Activated B cell treated with CpG ODN at 0.5 μM for 24 hours (primary cell): ENCODE measurements at regions of chr1 and their contacts with region 1.

Region 1: GRCh38 chr1:40032240-40032891 is 8.2 kb upstream of the CAP1 start:
- DNase-seq: no peak
- ATAC-seq: peak; percentile 76
- H3K4me3 Mint-ChIP-seq: no peak overlapping the region
- H3K27ac Mint-ChIP-seq: no peak overlapping the region
- H3K4me1 Mint-ChIP-seq: peaks cover 45% of the 10 kb centered on the region
- H3K27me3 Mint-ChIP-seq: no peaks in the 10 kb centered on the region
- CTCF ChIP-seq: peak; percentile 34

Region 2: DNA sequence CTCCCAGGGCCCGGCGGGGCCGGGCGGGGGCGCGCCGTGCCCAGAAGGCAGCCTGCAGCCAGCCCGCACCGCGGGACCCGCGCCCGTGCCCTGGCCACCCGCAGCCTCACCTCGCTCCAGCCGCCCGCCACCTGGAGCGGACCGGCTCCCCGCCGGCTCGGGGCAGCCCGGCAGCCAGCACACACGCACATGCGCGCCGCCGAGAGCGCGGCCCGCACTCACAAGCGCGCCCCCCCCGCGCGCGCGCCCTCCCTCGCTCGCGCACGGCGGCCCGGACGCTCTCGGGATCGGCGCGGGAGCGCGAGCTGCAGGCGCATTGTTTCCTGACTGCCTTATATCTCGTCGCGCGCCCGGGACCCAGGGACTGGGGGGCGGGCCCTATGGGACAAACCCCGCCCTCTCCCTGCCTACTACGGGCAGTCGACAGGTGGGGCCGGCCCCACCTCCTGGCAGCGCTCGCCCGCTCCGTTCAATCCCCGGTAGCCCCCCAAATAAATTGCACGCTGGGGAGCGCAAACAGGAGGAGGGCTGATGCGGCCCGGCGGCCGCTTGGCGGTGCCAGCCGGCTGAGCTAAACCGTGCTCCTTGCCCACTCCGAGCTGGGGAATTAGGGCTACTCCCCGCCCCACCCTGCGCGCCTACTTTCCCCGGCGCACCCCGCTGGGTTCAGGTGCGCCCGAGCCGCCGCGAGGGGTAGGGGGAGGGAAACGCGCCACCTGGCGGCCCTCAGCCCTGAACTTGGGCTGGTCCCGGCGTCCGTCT is 130.5 kb before region 1 on chr1 and contains the start of gene MYCL:
- CTCF ChIA-PET with region 1: interaction called, 5 read pairs
- POLR2A ChIA-PET with region 1: no interaction called
- intact Hi-C with region 1: loop called (anchors 5 kb)
- DNase-seq: peak; percentile 63
- ATAC-seq: peak; percentile 81
- H3K4me3 Mint-ChIP-seq: peak within 1 kb of the TSS; percentile 75
- H3K27ac Mint-ChIP-seq: no peak within 1 kb of the TSS
- H3K4me1 Mint-ChIP-seq: peaks cover 6% of the 10 kb centered on the region
- H3K27me3 Mint-ChIP-seq: peaks cover 42% of the 10 kb centered on the region
- CTCF ChIP-seq: peak; percentile 46
- total RNA-seq, gene MYCL: 0.10 and 0.29 TPM in 2 replicates

Region 3: GRCh38 chr1:39919545-39919944 is 112.8 kb before region 1 on chr1:
- CTCF ChIA-PET with region 1: interaction called, 91 read pairs
- POLR2A ChIA-PET with region 1: no interaction called
- intact Hi-C with region 1: loop called (anchors 1 kb)
- DNase-seq: peak; percentile 22
- ATAC-seq: peak; percentile 99
- H3K4me3 Mint-ChIP-seq: no peak overlapping the region
- H3K27ac Mint-ChIP-seq: no peak overlapping the region
- H3K4me1 Mint-ChIP-seq: peaks cover 2% of the 10 kb centered on the region
- H3K27me3 Mint-ChIP-seq: no peaks in the 10 kb centered on the region
- CTCF ChIP-seq: no peak

Region 4: DNA sequence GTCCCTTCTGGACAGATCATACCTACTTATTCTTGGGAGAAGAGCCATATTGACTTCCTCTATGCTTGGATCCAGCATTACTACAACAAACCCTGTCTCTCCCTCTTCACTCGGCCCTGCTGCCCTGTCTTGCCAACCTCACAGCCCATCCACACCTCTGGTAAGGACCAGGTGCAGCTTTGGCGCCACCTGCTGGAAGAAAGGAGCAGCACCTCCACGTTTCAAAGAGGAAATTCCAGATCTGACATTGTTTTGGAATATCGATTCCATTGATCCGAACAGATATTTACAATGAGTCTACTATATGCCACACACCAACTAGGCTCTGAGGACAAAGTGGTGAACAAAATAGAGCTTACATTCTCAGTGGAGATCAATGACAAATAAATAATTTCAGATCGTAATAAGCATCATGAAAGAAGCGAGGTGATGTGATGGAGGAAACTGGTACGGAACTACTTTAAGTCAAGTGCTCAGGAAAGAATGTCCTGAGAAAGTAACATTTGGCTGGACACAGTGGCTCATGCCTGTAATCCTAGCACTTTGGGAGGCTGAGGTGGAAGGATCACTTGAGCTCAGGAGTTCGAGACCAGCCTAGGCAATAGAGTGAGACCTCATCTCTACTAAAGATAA is 58.7 kb before region 1 on chr1:
- CTCF ChIA-PET with region 1: interaction called, 50 read pairs
- POLR2A ChIA-PET with region 1: interaction called, 5 read pairs
- intact Hi-C with region 1: loop called (anchors 1 kb)
- DNase-seq: peak; percentile 58
- ATAC-seq: peak; percentile 86
- H3K4me3 Mint-ChIP-seq: no peak overlapping the region
- H3K27ac Mint-ChIP-seq: no peak overlapping the region
- H3K4me1 Mint-ChIP-seq: peaks cover 8% of the 10 kb centered on the region
- H3K27me3 Mint-ChIP-seq: no peaks in the 10 kb centered on the region
- CTCF ChIP-seq: peak; percentile 79

Region 5: DNA sequence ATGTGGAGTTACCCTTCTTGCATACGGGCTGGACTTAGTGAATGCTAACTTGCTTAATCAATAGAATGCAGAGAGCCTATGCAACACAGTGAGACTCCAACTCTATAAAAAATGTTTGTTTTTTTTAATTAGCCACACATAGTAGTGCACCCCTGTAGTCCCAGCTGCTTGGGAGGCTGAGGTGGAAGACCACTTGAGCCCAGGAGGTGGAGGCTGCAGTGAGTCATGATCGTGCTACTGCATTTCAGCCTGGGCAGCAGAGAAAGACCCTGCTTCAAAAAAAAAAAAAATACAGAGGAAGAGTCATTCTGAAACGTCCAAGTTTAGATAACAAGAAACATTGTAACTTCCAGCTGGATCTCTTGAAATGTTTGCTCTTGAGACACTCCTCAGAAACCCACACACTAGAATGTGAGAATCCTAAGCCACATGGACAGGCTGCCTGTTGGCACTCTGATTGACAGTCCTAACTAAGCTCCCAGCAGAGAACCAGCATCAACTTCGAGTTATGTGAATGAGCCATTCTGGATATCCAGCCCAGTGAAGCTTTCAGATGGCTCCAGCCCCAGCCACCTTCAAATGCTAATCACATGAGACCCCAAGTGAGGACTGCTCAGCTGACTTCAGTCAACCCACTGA is 11.8 kb before region 1 on chr1:
- CTCF ChIA-PET with region 1: interaction called, 13 read pairs
- POLR2A ChIA-PET with region 1: interaction called, 3 read pairs
- intact Hi-C with region 1: no loop called
- DNase-seq: no peak
- ATAC-seq: no peak
- H3K4me3 Mint-ChIP-seq: no peak overlapping the region
- H3K27ac Mint-ChIP-seq: no peak overlapping the region
- H3K4me1 Mint-ChIP-seq: peaks cover 22% of the 10 kb centered on the region
- H3K27me3 Mint-ChIP-seq: no peaks in the 10 kb centered on the region
- CTCF ChIP-seq: no peak